WTC11 (cell line): ENCODE measurements at regions of chr20 and their contacts with region 1.

Region 1: GRCh38 chr20:33963751-33964150 is 30.0 kb upstream of the RALY start:
- DNase-seq: no peak
- ATAC-seq: no peak
- H3K4me3 Mint-ChIP-seq: no peak overlapping the region
- H3K27ac Mint-ChIP-seq: no peak overlapping the region
- H3K4me1 Mint-ChIP-seq: peaks cover 5% of the 10 kb centered on the region
- H3K27me3 Mint-ChIP-seq: no peaks in the 10 kb centered on the region
- CTCF ChIP-seq: no peak

Region 2: DNA sequence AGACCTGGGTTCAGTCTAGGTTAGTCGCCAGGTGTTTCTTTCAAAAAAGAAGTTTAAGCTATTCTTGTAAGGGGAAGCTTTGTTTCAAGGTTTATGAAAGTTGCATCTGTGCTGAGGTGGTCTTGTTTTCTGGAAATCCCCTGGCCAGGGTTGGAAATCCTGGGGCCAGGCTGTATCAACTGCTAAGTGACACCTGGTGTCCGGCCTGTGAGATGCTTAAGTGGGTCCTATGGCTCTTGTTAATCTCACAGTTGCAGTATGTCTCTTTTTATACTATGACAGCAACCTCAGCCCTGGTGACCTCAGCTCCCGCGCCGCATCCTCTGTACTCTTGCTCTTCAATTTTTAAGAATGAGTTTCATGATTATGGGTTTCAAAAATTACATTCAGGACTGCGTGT is 80.6 kb before region 1 on chr20:
- CTCF ChIA-PET with region 1: no interaction called
- POLR2A ChIA-PET with region 1: no interaction called
- DNase-seq: no peak
- ATAC-seq: no peak
- H3K4me3 Mint-ChIP-seq: no peak overlapping the region
- H3K27ac Mint-ChIP-seq: no peak overlapping the region
- H3K4me1 Mint-ChIP-seq: no peaks in the 10 kb centered on the region
- H3K27me3 Mint-ChIP-seq: no peaks in the 10 kb centered on the region; the same call in 1 of the 2 replicates
- CTCF ChIP-seq: no peak

Region 3: GRCh38 chr20:34058831-34059230 is 95.1 kb after region 1 on chr20:
- CTCF ChIA-PET with region 1: no interaction called
- POLR2A ChIA-PET with region 1: no interaction called
- DNase-seq: no peak
- ATAC-seq: no peak
- H3K4me3 Mint-ChIP-seq: no peak overlapping the region
- H3K27ac Mint-ChIP-seq: no peak overlapping the region
- H3K4me1 Mint-ChIP-seq: peaks cover 10% of the 10 kb centered on the region
- H3K27me3 Mint-ChIP-seq: no peaks in the 10 kb centered on the region
- CTCF ChIP-seq: no peak

Region 4: DNA sequence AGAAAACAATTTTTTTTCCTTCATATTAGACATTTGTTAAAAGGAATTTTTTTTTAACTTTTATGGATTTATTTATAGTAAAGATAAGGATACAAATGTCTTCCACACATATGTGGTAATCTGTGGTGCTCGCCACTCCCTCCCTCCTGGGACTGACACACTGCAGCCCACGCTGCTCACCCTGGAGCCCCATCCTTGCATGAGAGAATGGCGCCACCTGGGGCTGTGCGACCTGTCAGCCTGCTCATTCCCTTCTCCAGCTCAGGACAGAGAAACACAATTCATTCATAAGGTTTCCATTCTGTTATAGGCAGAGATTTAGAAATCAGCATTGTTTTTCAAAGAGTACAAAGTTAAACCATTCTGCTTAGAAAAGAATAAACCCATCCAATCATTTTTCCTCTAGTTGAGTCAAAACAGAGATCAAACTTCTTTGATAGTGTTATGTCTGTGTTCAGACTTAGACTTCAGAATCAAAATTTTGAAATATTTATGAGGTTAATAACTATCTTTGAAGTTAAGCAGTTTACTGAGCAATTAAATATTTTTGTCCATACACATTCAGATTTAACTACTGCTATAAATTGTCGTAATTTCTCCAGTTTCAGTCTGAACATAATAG is 509.6 kb after region 1 on chr20:
- CTCF ChIA-PET with region 1: no interaction called
- POLR2A ChIA-PET with region 1: interaction called, 10 read pairs
- DNase-seq: peak; percentile 74
- ATAC-seq: peak; percentile 94
- H3K4me3 Mint-ChIP-seq: no peak overlapping the region
- H3K27ac Mint-ChIP-seq: no peak overlapping the region
- H3K4me1 Mint-ChIP-seq: no peaks in the 10 kb centered on the region
- H3K27me3 Mint-ChIP-seq: no peaks in the 10 kb centered on the region
- CTCF ChIP-seq: no peak